A549 (cell line): ENCODE measurements at regions of chr2 and their contacts with region 1.

Region 1: GRCh38 chr2:217629347-217629746 is 373.4 kb downstream of the TNS1 start:
- DNase-seq: no peak
- ATAC-seq: no peak
- H3K4me3 ChIP-seq: no peak overlapping the region
- H3K27ac ChIP-seq: no peak overlapping the region
- H3K4me1 ChIP-seq: no peaks in the 10 kb centered on the region
- CTCF ChIP-seq: no peak
- EP300 ChIP-seq: no peak
- POLR2A ChIP-seq: no peak
- RAD21 ChIP-seq: no peak

Region 2: DNA sequence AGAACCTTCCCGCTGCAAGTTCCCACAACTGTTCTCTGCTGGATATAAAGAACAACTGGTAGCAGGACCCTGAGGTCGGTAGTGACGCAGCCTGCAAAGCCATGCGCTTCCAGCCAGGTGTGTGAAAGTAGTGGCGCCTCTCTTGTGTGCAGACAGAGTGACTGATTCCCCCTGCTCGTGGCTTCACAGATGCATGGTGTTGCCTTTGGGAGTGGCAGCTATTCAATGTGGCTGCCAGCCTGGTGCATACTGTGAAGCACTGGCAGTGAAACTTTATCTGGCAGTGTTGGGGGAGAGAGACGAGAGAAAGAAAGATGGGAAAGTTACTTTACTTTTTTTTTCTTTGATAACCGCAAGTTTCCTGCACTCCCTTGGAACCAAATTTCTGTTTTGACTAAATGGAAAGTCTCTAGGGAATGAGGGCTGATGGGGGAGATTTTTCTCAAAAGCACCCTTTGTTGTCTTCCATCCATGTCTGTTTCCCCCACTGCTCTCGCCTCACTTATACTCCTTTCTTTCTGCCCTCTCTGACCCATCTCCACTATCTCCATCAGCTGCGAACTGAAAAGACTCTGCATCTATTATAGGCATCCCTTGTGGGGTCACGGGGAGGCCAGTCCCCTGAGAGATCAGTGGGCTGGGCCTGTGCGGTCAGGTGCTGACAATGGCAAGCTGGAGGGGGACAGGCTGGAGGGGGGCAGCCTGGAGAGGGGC is 679.5 kb before region 1 on chr2:
- CTCF ChIA-PET with region 1: no interaction called
- POLR2A ChIA-PET with region 1: interaction called, 11 read pairs
- DNase-seq: no peak
- ATAC-seq: no peak
- H3K4me3 ChIP-seq: no peak overlapping the region
- H3K27ac ChIP-seq: no peak overlapping the region
- H3K4me1 ChIP-seq: no peaks in the 10 kb centered on the region
- CTCF ChIP-seq: no peak
- EP300 ChIP-seq: no peak
- POLR2A ChIP-seq: no peak
- RAD21 ChIP-seq: no peak